ENCODE measurements at regions of chr16 and their contacts with region 1.

Region 1: GRCh38 chr16:71499775-71500364 is 10.7 kb upstream of the ZNF19 start:
- DNase-seq: peak in 2 of 5 donors; percentile 13 to 22
- ATAC-seq: peak in 2 of 4 donors; percentile 52 to 55
- H3K4me3 ChIP-seq: no peak overlapping the region
- H3K27ac ChIP-seq: no peak overlapping the region
- H3K4me1 ChIP-seq: no peaks in the 10 kb centered on the region
- H3K27me3 ChIP-seq: peaks cover 0 to 22% (median 0%) of the 10 kb centered on the region in 9 donors
- CTCF ChIP-seq: peak; percentile 37 to 77 (median 66)
- POLR2A ChIP-seq: no peak

Region 2: GRCh38 chr16:71412270-71413160 is 87.4 kb before region 1 on chr16:
- intact Hi-C with region 1: loop called (anchors 1 to 5 kb)
- DNase-seq: peak in 4 of 5 donors; percentile 36 to 59 (median 57)
- ATAC-seq: peak in 3 of 4 donors; percentile 77 to 80 (median 79)
- H3K4me3 ChIP-seq: no peak overlapping the region
- H3K27ac ChIP-seq: no peak overlapping the region
- H3K4me1 ChIP-seq: peaks cover 0 to 9% (median 0%) of the 10 kb centered on the region in 12 donors
- H3K27me3 ChIP-seq: peaks cover 0 to 47% (median 12%) of the 10 kb centered on the region in 9 donors
- CTCF ChIP-seq: peak; percentile 73 to 97 (median 85)
- POLR2A ChIP-seq: no peak

Region 3: GRCh38 chr16:71845639-71846430 is 346.0 kb after region 1 on chr16 and contains the start of gene ATXN1L:
- intact Hi-C with region 1: no loop called
- DNase-seq: peak; percentile 91 to 95 (median 93)
- ATAC-seq: peak; percentile 95 to 98 (median 97)
- H3K4me3 ChIP-seq: peak within 1 kb of the TSS; percentile 72 to 100 (median 92)
- H3K27ac ChIP-seq: peak within 1 kb of the TSS; percentile 57 to 97 (median 90)
- H3K4me1 ChIP-seq: peaks cover 0 to 38% (median 17%) of the 10 kb centered on the region in 12 donors
- H3K27me3 ChIP-seq: no peaks in the 10 kb centered on the region
- CTCF ChIP-seq: peak in 4 of 12 donors; percentile 7 to 30 (median 22)
- POLR2A ChIP-seq: peak; percentile 45 to 85
- total RNA-seq, gene ATXN1L: 14.3 to 24.2 (median 19.8) TPM

Measured in heart left ventricle (tissue), 16 donors.